ENCODE measurements at regions of chr2 and their contacts with region 1.

Region 1: DNA sequence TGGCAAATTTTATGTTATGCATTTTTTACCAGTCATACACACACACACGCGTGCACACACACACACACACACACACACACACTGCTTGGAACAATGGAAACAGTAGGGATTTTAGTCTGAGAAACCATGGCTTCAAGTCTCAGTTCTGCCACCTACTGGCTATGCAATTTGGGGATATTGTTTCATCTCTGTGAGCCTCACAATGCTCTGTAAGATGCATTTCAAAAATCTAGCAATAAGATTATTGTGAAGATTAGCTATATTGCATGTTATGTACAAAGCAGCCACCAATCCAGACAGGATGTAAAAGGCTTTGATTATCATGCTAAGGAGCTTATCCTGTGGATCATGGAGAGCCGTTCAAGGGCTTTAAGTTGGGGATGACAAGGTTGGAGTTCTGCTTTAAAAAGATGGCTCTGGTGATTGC is 401.4 kb downstream of the NBAS start:
- DNase-seq: peak; percentile 53
- H3K4me3 ChIP-seq: no peak overlapping the region
- H3K27ac ChIP-seq: no peak overlapping the region
- H3K4me1 ChIP-seq: no peaks in the 10 kb centered on the region; a peak in 1 of 4 replicates
- H3K27me3 ChIP-seq: no peaks in the 10 kb centered on the region
- CTCF ChIP-seq: peak; percentile 70
- EP300 ChIP-seq: no peak
- RAD21 ChIP-seq: peak; percentile 76

Region 2: GRCh38 chr2:15145046-15145817 is 14.5 kb before region 1 on chr2:
- CTCF ChIA-PET with region 1: interaction called, 18 read pairs
- POLR2A ChIA-PET with region 1: interaction called, 3 read pairs
- DNase-seq: no peak
- H3K4me3 ChIP-seq: no peak overlapping the region
- H3K27ac ChIP-seq: no peak overlapping the region
- H3K4me1 ChIP-seq: no peaks in the 10 kb centered on the region
- H3K27me3 ChIP-seq: no peaks in the 10 kb centered on the region
- CTCF ChIP-seq: no peak
- EP300 ChIP-seq: no peak
- RAD21 ChIP-seq: no peak